Thyroid gland (tissue), 4 donors: ENCODE measurements at regions of chr4 and their contacts with region 1.

Region 1: DNA sequence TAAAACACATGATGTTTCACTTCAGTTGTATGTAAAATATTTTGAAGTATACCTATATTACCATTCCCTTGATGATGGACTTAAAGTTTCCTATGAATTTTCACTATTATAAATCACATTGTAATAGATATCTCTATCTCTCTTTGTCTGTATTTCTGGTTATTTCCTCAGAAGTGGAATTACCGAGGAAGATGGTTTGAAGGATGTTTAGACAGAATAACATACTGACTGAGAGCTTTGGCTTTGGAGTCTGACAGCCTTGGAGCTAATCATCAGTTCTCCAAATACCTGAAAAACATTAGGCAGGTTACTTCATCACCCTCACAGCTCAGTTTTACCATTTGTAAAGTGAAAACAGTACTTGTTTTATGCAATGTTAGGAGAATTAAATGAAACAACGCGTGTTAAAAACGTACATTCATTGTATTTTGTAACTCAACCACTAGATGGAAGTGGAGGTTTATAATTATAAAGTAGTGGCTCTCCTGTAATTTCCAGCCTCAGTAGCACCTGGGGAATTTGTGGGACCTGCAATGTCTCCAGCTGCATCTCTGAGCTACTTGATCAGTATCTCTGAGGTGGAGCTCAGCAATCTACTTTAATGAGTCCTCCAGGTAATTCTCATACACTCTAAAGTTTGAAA is 14.3 kb downstream of the JCHAIN start:
- DNase-seq: no peak
- H3K4me3 ChIP-seq: no peak overlapping the region
- H3K27ac ChIP-seq: no peak overlapping the region
- H3K4me1 ChIP-seq: no peaks in the 10 kb centered on the region
- H3K27me3 ChIP-seq: no peaks in the 10 kb centered on the region
- CTCF ChIP-seq: peak in 5 of 6 experiments; percentile 32 to 78 (median 58)
- POLR2A ChIP-seq: no peak

Region 2: GRCh38 chr4:71009890-71010588 is 358.1 kb after region 1 on chr4:
- intact Hi-C with region 1: loop called (anchors 5 kb)
- DNase-seq: no peak
- H3K4me3 ChIP-seq: no peak overlapping the region
- H3K27ac ChIP-seq: no peak overlapping the region
- H3K4me1 ChIP-seq: no peaks in the 10 kb centered on the region
- H3K27me3 ChIP-seq: no peaks in the 10 kb centered on the region
- CTCF ChIP-seq: peak in 5 of 6 experiments; percentile 21 to 78 (median 50)
- POLR2A ChIP-seq: no peak